ENCODE measurements at regions of chr17 and their contacts with region 1.

Region 1: DNA sequence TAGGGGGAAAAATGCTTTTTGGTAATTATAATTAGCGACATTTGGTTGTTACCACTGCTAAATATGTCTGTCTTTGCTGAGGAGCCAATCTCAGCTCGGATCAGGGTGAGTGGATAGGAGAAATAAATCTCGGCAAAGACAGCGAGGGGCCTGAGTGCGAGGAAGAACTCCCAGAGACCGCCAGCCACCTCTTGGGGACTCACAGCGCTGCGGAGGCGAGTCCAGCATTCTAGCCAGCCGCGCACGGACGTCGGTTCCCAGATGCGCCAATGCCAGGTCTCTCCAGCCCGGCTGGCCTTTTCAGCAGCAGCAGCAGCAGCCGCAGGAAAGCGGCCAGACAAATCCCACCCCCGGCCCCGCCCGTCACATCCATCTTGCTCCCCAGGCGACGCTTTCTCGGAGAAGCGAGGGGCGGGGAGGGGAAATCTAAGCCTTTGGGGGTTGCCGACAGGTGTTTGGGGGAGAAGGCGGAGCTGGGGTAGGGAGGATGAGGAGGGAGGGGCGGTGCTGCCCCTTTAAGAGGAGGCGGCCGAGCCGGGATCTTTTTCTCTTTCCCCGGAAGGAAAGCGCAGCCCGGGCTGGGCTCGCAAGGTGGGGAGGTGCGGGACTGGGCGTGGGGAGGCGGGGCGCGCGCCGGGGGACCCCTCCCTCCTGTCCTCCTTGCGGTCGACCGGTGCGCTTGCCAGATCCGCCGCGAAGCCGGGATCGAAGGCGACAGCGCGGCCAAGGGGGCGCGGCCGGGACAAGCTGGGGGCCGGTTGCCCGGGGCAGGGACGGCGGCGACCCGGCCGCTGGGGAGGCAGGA is at the start of gene ITGA3:
- DNase-seq: peak; percentile 93 to 96
- ATAC-seq: peak; percentile 57 to 73
- H3K4me3 ChIP-seq: peak within 1 kb of the TSS; percentile 77
- H3K27ac ChIP-seq: peak within 1 kb of the TSS; percentile 92 to 97
- H3K4me1 ChIP-seq: peaks cover 74% of the 10 kb centered on the region
- CTCF ChIP-seq: no peak
- EP300 ChIP-seq: 0 out of 5 replicates have a peak, but pooled peaks of 1 of the 2 experiments have one; percentile 15
- POLR2A ChIP-seq: peak; percentile 95
- RAD21 ChIP-seq: peak; percentile 2 to 35; a peak in 1 of 5 replicates
- polyA plus RNA-seq, gene ITGA3: 141 and 181 TPM in 2 replicates

Region 2: GRCh38 chr17:49913177-49914083 is 142.2 kb before region 1 on chr17:
- CTCF ChIA-PET with region 1: no interaction called
- POLR2A ChIA-PET with region 1: no interaction called
- DNase-seq: peak; percentile 45 to 81
- ATAC-seq: peak in 1 of 2 experiments; percentile 50; a peak in 3 of 6 replicates
- H3K4me3 ChIP-seq: no peak overlapping the region
- H3K27ac ChIP-seq: peak overlapping the region in 1 of 2 experiments; percentile 44; a peak in 2 of 6 replicates
- H3K4me1 ChIP-seq: peaks cover 20% of the 10 kb centered on the region
- CTCF ChIP-seq: no peak
- EP300 ChIP-seq: no peak
- POLR2A ChIP-seq: no peak
- RAD21 ChIP-seq: no peak

Region 3: GRCh38 chr17:49971848-49972485 is 83.7 kb before region 1 on chr17:
- CTCF ChIA-PET with region 1: no interaction called
- POLR2A ChIA-PET with region 1: no interaction called
- DNase-seq: no peak
- ATAC-seq: no peak
- H3K4me3 ChIP-seq: no peak overlapping the region
- H3K27ac ChIP-seq: no peak overlapping the region
- H3K4me1 ChIP-seq: peaks cover 12% of the 10 kb centered on the region; the same call in 2 of the 3 replicates
- CTCF ChIP-seq: no peak
- EP300 ChIP-seq: no peak
- POLR2A ChIP-seq: no peak
- RAD21 ChIP-seq: no peak

Region 4: GRCh38 chr17:50037321-50038071 is 18.1 kb before region 1 on chr17:
- CTCF ChIA-PET with region 1: interaction called, 473 read pairs
- POLR2A ChIA-PET with region 1: interaction called, 13 read pairs
- DNase-seq: peak in 1 of 2 experiments; percentile 77
- ATAC-seq: peak; percentile 85 to 94
- H3K4me3 ChIP-seq: no peak overlapping the region
- H3K27ac ChIP-seq: peak overlapping the region; percentile 82 to 88
- H3K4me1 ChIP-seq: peaks cover 43% of the 10 kb centered on the region
- CTCF ChIP-seq: no peak
- EP300 ChIP-seq: peak in 1 of 2 experiments; percentile 46; a peak in 1 of 5 replicates
- POLR2A ChIP-seq: no peak
- RAD21 ChIP-seq: 0 out of 5 replicates have a peak, but pooled peaks have one; percentile 16 to 22

Region 5: GRCh38 chr17:50079334-50080095 is 23.9 kb after region 1 on chr17:
- CTCF ChIA-PET with region 1: interaction called, 345 read pairs
- POLR2A ChIA-PET with region 1: interaction called, 7 read pairs
- DNase-seq: peak; percentile 79 to 87
- ATAC-seq: peak; percentile 73 to 88
- H3K4me3 ChIP-seq: no peak overlapping the region
- H3K27ac ChIP-seq: peak overlapping the region in 1 of 2 experiments; percentile 71; a peak in 3 of 6 replicates
- H3K4me1 ChIP-seq: peaks cover 12% of the 10 kb centered on the region; the same call in 2 of the 3 replicates
- CTCF ChIP-seq: peak; percentile 97
- EP300 ChIP-seq: no peak
- POLR2A ChIP-seq: no peak
- RAD21 ChIP-seq: peak; percentile 76 to 77

Region 6: DNA sequence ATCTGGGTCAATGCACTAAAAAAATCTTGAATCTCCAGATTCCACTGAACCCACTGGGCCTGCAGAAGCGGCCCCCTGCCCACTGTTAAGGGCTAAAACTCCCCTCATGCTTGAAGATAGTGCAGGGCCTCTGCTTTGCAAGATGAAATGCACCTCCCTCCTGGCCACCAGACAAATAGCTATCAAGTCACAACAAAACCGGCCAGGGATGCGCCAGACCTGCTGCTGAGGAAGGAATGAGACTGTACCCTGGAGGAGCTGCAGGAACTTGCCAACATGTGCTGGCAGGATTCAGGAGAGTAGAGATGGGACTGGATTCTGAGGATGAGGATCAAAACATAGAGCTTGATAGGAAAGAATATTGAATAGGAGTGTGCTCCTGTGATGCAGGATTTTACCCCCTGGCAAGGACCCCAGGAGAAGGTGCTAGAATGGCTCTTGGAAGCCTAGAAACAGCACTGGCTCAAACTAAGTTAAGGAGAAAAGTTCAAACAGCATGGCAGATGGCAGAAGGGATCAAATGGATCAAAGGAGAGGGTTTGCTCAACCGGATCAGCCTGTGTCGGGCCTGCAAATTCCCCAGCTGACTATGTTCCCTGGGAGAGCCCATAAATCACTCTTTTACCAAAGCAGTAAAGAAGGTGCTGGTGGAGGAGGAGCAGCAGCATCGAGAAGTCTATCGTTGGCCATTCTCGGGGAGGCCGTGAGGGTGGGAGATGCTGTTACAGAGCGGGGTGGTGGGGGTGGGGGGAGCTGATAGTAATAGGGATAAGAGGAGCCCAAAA is 263.1 kb after region 1 on chr17:
- CTCF ChIA-PET with region 1: no interaction called
- POLR2A ChIA-PET with region 1: no interaction called
- DNase-seq: no peak
- ATAC-seq: 0 out of 6 replicates have a peak, but pooled peaks of 1 of the 2 experiments have one; percentile 19
- H3K4me3 ChIP-seq: no peak overlapping the region
- H3K27ac ChIP-seq: no peak overlapping the region
- H3K4me1 ChIP-seq: no peaks in the 10 kb centered on the region
- CTCF ChIP-seq: no peak
- EP300 ChIP-seq: no peak
- POLR2A ChIP-seq: no peak
- RAD21 ChIP-seq: no peak

Measured in A549 (cell line).